A549 (cell line): ENCODE measurements at regions of chr1 and their contacts with region 1.

Region 1: DNA sequence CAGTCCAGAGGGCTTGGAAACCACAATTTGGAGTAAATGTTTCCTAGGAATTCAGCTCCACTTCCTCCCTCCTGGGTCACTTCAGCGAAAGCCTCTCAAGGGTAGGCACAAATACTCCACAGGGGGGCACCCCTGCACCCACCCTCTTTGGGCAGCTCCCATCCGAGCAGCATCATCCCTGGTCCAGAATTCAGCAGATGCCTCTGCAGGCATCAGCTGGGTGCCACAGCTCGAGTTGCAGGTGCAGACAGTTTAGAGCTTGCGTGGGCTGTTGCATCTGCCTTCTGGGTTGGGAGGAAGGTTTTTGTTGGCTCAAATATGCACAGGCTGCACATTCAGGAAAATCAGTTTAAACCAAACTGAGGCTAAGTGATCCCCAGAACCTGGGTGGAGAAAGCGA is 25.0 kb downstream of the KANK4 start:
- DNase-seq: peak; percentile 19 to 22
- ATAC-seq: peak; percentile 62 to 85; a peak in 4 of 6 replicates
- H3K4me3 ChIP-seq: no peak overlapping the region
- H3K27ac ChIP-seq: no peak overlapping the region
- H3K4me1 ChIP-seq: no peaks in the 10 kb centered on the region
- CTCF ChIP-seq: no peak
- EP300 ChIP-seq: no peak
- POLR2A ChIP-seq: no peak
- RAD21 ChIP-seq: peak in 1 of 2 experiments; percentile 55; a peak in 4 of 5 replicates

Region 2: DNA sequence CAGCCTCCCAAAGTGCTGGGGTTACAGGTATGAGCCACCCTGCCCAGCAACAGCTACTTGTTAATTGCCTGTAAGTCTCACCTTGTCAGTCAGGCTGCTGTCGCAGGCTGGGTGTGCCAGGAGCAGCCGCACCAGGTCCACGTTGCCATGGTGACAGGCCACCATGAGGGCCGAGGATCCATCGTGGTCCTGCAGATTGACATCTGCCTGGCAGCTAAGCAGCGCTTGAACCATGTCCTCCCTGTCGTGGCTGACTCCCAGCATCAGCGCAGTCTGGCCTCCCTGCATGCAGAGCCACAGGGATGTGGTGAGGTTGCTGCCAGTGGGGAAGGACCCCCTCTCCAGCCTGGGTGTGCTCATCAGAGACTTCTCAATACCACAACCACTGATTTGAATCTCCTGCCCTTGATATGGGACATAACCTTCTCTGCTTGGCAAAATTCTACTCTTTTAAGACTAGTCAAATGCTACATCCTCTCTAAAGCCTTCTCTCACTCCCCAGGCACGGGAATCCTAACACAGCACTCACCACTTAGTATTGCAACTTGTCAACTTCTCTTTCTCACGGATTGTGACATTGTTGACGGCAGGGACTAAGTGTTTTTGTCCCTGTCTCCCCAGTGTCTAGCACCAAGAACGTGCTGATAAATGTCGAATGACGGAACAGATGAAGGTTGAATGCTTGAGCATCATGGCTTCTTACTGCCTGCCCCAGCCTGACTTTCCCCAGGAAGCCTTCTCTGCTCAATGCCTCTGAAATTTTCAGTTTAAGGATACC is 46.7 kb before region 1 on chr1:
- CTCF ChIA-PET with region 1: no interaction called
- POLR2A ChIA-PET with region 1: no interaction called
- DNase-seq: no peak
- ATAC-seq: no peak; a peak in 1 of 6 replicates
- H3K4me3 ChIP-seq: no peak overlapping the region
- H3K27ac ChIP-seq: no peak overlapping the region
- H3K4me1 ChIP-seq: no peaks in the 10 kb centered on the region
- CTCF ChIP-seq: no peak
- EP300 ChIP-seq: no peak
- POLR2A ChIP-seq: no peak
- RAD21 ChIP-seq: no peak

Region 3: DNA sequence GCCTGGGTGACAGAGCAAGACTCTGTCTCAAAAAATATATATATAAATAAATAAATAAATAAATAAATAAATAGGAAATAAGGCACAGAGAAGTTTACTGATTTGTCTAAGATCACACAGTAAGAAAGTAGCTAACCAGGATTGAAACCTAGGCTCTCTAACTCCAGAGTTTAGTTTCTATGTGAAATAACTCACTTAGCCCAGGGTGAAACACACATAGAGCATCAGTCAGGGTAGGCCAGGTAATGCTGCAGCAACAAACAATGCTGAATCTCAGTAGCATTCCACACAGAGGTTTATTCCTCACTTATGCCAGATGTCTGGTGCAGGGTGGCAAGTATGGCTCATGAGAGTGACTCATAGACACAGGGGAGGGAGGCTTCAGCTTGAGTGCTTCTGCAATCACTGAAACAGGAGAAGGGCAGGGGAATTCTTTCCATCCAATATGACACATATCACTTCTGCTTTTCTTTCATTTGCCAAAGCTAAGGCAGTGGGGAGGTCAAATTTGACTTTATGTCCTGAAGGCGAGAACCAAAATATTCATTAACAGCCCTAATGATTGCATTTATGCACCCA is 62.1 kb after region 1 on chr1:
- CTCF ChIA-PET with region 1: no interaction called
- POLR2A ChIA-PET with region 1: no interaction called
- DNase-seq: peak; percentile 35 to 41
- ATAC-seq: peak; percentile 76 to 90
- H3K4me3 ChIP-seq: no peak overlapping the region
- H3K27ac ChIP-seq: no peak overlapping the region
- H3K4me1 ChIP-seq: peaks cover 3% of the 10 kb centered on the region; the same call in 1 of the 3 replicates
- CTCF ChIP-seq: no peak
- EP300 ChIP-seq: no peak
- POLR2A ChIP-seq: no peak
- RAD21 ChIP-seq: no peak

Region 4: DNA sequence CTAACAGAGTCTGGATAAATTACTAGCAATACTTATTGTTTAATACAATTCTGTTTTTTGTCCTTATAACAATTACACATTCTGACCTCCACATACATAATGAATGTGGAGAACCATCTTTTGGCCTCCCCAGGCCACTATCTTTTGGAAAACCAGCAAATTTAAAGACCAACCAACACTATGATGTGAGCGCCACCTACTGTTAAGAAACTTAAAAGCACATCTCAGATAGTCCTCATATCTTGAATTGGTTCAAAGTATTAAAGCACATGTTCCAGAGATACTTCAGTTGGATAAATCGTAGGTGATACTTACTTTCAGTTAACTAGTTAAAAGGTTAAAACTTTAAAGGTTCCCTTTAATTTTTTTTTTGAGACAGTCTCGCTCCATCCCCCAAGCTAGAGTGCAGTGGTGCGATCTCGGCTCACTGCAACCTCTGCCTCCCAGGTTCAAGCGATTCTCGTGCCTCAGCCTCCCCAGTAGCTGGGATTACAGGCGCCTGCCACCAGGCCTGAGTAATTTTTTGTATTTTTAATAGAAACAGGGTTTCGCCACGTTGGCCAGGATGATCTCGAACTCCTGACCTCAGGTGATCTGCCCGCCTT is 113.2 kb after region 1 on chr1:
- CTCF ChIA-PET with region 1: interaction called, 12 read pairs
- POLR2A ChIA-PET with region 1: no interaction called
- DNase-seq: peak; percentile 18 to 46
- ATAC-seq: peak; percentile 50 to 80; a peak in 4 of 6 replicates
- H3K4me3 ChIP-seq: no peak overlapping the region
- H3K27ac ChIP-seq: no peak overlapping the region
- H3K4me1 ChIP-seq: no peaks in the 10 kb centered on the region
- CTCF ChIP-seq: peak; percentile 80
- EP300 ChIP-seq: no peak
- POLR2A ChIP-seq: no peak
- RAD21 ChIP-seq: peak; percentile 87 to 90